ENCODE measurements at regions of chr2 and their contacts with region 1.

Region 1: DNA sequence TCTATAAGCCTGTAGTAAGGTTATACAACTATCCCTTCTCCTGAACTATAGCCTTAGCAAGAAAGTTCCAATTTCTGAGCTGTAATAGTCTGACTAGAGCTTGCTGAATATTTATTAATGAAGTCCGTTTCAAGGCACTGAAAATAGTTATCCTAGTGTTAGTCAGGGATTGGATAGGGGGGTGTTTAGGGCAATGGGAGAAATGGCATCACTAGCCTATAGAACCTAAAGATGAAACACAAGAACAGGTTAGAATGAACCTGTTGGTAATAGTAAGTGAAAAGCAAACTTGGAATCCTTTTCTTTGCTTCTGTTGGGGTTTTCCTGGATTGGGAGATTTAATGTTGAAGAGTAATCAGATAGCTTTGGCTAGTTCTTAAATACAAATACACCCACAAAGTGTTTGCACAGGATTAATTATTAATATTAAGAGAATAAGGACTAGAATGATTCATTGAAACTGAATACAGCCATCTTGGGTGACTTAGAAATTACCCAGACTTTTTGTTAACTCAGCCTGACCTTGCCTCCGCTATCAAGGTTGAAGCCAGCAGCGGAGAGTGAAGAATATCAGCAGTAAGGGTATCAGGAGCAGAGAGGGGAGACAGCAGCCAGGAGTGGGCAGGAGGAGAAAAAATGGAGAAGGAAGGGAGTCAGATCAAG is 14.4 kb downstream of the CCNT2 start:
- DNase-seq: no peak
- H3K4me3 Mint-ChIP-seq: peak overlapping the region; percentile 63
- H3K27ac Mint-ChIP-seq: peak overlapping the region; percentile 88
- H3K4me1 Mint-ChIP-seq: peaks cover 35% of the 10 kb centered on the region
- H3K27me3 Mint-ChIP-seq: no peaks in the 10 kb centered on the region
- CTCF ChIP-seq: no peak

Region 2: GRCh38 chr2:134002391-134002790 is 930.6 kb before region 1 on chr2:
- CTCF ChIA-PET with region 1: no interaction called
- intact Hi-C with region 1: no loop called
- DNase-seq: no peak
- H3K4me3 Mint-ChIP-seq: no peak overlapping the region
- H3K27ac Mint-ChIP-seq: no peak overlapping the region
- H3K4me1 Mint-ChIP-seq: peaks cover 11% of the 10 kb centered on the region
- H3K27me3 Mint-ChIP-seq: no peaks in the 10 kb centered on the region
- CTCF ChIP-seq: no peak

Region 3: DNA sequence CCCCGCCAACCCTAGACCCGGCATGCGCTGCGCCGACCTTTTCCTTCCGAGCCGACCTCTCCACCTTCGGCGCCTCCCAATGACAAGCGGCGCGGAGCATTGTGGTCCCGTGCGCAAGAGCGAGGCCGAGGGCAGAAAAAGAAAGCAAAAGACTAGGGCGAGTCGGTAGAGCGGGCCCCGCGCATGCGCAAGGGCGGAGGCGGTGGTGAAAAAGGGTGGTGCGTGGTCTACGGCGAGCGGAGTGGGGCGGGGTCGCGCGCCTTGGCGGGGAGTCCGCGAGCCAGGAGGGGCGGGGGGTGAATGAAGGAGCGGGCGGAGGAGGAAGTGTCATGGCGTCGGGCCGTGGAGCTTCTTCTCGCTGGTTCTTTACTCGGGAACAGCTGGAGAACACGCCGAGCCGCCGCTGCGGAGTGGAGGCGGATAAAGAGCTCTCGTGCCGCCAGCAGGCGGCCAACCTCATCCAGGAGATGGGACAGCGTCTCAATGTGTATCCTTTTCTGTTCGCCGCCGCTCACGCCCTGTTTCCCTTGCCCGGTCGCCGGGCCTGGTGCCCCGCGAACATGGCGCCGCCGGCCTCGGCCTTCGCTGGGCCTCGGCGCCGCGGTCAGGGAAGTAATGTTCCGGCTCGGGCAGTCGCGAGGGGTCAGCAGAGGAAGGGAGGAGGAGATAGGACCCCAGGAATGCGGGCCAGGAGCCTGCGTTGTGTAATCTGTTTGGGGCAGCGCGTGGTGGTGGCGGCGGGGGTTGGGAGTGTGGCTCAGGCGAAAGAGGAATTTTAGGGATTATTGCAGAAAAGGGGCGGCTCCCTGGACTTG is 14.3 kb before region 1 on chr2 and contains the start of gene CCNT2:
- CTCF ChIA-PET with region 1: interaction called, 3 read pairs
- intact Hi-C with region 1: loop called (anchors 2 kb)
- DNase-seq: peak; percentile 99
- H3K4me3 Mint-ChIP-seq: peak within 1 kb of the TSS; percentile 99
- H3K27ac Mint-ChIP-seq: peak within 1 kb of the TSS; percentile 99
- H3K4me1 Mint-ChIP-seq: peaks cover 14% of the 10 kb centered on the region
- H3K27me3 Mint-ChIP-seq: no peaks in the 10 kb centered on the region
- CTCF ChIP-seq: no peak
- total RNA-seq, gene CCNT2: 40.0 and 43.8 TPM in 2 replicates